ENCODE measurements at regions of chr17 and their contacts with region 1.

Region 1: DNA sequence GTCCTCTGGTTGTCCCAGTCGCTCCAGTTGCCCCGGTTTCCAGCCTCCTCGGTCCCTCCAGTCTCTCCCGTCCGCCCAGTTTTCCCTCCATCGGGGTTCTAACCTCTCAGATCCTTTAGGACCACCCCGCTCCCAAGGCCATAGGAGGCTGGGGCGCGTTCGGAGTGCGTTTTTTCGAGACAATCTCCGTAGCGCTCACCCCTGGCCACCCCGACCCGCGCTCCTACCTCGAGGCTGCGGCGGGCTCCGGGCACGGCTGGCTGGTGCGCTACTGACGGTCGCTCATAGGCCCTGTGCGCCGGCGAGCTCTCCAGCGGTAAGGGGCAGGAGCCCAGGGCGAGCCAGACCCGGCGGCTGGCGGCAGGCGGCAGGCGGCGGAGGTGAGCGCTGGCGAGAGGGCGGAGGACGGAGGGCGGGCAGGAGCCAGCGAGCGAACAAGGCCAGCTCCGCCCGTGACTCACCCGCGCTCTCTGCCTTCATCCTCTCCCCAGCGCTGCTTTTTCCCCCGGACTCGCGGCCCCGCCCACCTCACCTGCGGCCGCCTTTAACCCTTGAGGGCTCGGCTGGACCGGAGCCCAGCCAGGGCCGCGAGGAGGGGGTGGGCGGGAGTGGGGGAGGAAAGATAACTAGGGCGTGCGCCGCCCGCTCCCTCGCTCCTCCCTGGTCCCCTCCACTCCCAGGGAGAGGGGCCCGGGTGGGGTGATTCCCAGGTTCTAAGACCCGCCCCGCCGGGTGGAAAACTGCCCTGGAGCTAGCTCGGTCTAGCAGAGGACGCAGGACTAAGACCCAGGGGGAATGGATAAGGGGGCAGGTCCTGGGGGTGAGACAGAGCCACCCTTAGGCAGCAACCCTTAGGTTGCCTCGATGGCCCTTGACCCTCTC is at the start of gene SP6:
- DNase-seq: peak; percentile 49
- H3K4me3 Mint-ChIP-seq: peak within 1 kb of the TSS; percentile 15
- H3K27ac Mint-ChIP-seq: no peak within 1 kb of the TSS
- H3K4me1 Mint-ChIP-seq: peaks cover 20% of the 10 kb centered on the region
- H3K27me3 Mint-ChIP-seq: peaks cover 90% of the 10 kb centered on the region
- total RNA-seq, gene SP6: not detected

Region 2: GRCh38 chr17:47949136-47949759 is 98.3 kb after region 1 on chr17:
- CTCF ChIA-PET with region 1: interaction called, 10 read pairs
- POLR2A ChIA-PET with region 1: no interaction called
- DNase-seq: peak; percentile 84
- H3K4me3 Mint-ChIP-seq: peak overlapping the region; percentile 45
- H3K27ac Mint-ChIP-seq: peak overlapping the region; percentile 75
- H3K4me1 Mint-ChIP-seq: peaks cover 37% of the 10 kb centered on the region
- H3K27me3 Mint-ChIP-seq: no peaks in the 10 kb centered on the region

Measured in activated CD4-positive, alpha-beta T cell treated with anti-CD3 and anti-CD28 coated beads, Interleukin-2, amount 10 ng/mL, durations not matched to agents 7 days and 5 days (primary cell).